ENCODE measurements at regions of chr17 and their contacts with region 1.

Region 1: DNA sequence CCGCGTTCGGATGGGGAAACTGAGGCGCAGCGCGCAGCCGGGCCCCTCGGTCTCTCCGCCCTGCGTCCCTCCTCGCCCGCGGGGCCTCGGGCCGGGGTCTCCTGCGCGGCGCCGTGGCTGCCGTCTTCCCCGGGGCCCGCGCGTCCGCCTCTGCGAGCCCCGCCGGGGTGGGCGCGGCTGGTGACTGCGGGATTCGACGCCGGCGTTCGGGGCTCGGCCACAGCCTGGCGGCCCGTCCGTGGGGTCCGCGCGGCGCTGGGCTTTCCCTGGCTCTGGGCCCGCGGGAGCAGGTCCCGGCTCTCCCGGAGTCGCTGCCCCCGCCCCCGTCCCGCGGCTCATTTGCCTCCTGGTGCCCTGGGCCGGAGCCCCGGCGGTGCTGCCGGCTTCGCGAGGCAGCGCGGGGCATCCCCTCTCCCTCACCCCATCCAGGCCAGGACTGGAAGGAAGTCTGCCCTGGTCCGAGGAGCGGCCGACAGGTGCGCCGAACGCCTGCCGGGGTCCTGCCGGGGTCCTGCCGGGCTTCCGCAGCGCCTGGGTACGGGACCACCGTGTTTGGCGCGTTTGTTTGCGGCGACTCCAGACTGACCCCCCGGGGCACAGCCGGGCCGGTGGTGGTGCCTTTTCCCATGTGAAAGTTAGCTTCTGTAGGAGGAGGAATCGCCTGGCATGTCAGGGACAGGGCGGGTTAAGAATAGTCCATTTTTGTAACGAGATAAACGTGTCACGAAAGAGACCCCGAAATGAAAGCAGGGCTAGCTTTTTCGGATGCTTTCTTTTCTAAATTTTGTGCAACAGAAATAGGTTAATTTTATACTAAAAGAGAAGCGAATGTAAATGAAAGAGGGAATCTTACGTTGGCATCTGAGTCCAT is 671 bp downstream of the CHMP6 start:
- DNase-seq: no peak
- H3K4me3 ChIP-seq: peak overlapping the region; percentile 49 to 93 (median 70)
- H3K27ac ChIP-seq: no peak overlapping the region
- H3K4me1 ChIP-seq: peaks cover 0 to 5% (median 3%) of the 10 kb centered on the region in 4 experiments; a peak in 5 of 7 replicates
- H3K27me3 ChIP-seq: peaks cover 0 to 7% (median 3%) of the 10 kb centered on the region in 4 experiments; a peak in 5 of 7 replicates
- CTCF ChIP-seq: no peak
- EP300 ChIP-seq: no peak
- POLR2A ChIP-seq: no peak
- RAD21 ChIP-seq: no peak

Region 2: GRCh38 chr17:80942421-80943345 is 49.6 kb before region 1 on chr17:
- CTCF ChIA-PET with region 1: no interaction called
- POLR2A ChIA-PET with region 1: no interaction called
- DNase-seq: no peak
- H3K4me3 ChIP-seq: no peak overlapping the region
- H3K27ac ChIP-seq: no peak overlapping the region
- H3K4me1 ChIP-seq: no peaks in the 10 kb centered on the region
- H3K27me3 ChIP-seq: no peaks in the 10 kb centered on the region
- CTCF ChIP-seq: no peak
- EP300 ChIP-seq: no peak
- POLR2A ChIP-seq: no peak
- RAD21 ChIP-seq: no peak

Region 3: DNA sequence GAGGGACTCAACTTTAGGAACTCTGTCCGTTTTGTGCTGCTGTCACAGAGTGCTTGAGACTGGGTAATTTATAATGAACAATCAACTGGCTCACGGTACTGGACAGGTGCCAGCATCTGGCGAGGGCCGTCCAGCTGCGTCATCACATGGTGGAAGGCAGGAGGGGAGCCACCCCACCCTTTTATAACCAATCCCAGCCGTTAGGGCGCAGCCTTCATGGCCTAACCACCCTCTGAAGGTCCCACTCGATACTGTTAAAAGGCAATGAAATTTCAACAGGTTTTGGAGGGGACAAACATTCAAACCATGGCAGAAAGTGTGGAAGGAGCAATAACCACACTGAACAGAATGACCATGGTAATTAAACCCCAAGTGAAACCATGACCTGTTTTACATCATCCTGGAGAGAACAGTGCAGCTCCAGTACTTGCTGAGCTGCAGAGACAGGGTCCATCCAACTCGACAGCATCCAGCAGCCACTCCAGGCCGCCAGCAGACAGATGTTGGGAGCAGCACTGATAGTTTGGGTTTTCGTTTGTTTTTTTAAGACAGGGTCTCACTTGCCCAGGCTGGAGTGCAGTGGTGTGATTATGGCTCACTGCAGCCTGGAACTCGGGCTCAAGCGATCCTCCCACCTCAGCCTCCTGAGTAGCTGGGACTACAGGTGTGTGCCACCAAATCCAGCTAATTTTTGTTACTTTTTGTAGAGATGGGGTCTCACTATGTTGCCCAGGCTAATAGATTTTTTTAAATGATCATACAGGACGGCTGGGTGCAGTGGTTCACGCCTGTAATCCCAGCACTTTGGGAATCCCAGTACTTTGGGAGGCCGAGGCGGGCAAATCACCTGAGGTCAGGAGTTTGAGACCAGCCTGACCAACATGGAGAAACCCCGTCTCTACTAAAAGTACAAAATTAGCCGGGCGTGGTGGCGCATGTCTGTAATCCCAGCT is 10.4 kb after region 1 on chr17:
- CTCF ChIA-PET with region 1: interaction called, 5 read pairs
- POLR2A ChIA-PET with region 1: interaction called, 10 read pairs
- DNase-seq: no peak
- H3K4me3 ChIP-seq: no peak overlapping the region
- H3K27ac ChIP-seq: no peak overlapping the region
- H3K4me1 ChIP-seq: peaks cover 0 to 7% (median 1%) of the 10 kb centered on the region in 4 experiments; a peak in 3 of 7 replicates
- H3K27me3 ChIP-seq: peaks cover 7 to 22% (median 20%) of the 10 kb centered on the region in 4 experiments; a peak in 6 of 7 replicates
- CTCF ChIP-seq: no peak
- EP300 ChIP-seq: no peak
- POLR2A ChIP-seq: no peak
- RAD21 ChIP-seq: no peak